Mammary epithelial cell (primary cell): ENCODE measurements at regions of chr3 and their contacts with region 1.

Region 1: DNA sequence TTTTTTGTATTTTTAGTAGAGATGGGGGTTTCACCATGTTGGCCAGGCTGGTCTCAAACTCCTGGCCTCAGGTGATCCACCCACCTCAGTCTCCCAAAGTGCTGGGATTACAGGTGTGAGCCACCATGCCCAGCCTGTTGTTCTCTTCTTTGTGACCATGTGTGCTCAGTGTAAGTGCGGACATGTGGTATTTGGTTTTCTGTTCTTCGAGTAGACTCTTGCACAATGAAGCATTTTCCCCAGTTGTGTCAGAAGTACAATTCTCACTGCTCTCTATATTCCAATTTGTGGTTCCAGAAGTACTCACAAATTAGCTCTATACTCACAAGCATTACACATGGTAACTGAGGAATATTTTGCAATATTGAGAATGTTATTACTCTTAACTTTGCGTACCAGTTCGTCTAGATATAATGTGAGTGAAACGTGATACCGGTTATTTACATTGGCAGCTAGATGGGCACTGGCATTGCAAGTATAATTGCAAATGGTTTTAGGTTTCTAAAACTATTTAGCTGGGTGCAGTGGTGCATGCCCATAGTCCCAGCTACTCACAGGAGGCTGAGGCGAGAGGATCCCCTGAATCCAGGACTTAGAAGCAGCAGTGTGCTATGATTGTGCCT is 34.2 kb upstream of the MTMR14 start:
- DNase-seq: no peak
- H3K4me3 ChIP-seq: no peak overlapping the region
- H3K27ac ChIP-seq: no peak overlapping the region
- H3K4me1 ChIP-seq: no peaks in the 10 kb centered on the region
- H3K27me3 ChIP-seq: no peaks in the 10 kb centered on the region
- CTCF ChIP-seq: no peak

Region 2: DNA sequence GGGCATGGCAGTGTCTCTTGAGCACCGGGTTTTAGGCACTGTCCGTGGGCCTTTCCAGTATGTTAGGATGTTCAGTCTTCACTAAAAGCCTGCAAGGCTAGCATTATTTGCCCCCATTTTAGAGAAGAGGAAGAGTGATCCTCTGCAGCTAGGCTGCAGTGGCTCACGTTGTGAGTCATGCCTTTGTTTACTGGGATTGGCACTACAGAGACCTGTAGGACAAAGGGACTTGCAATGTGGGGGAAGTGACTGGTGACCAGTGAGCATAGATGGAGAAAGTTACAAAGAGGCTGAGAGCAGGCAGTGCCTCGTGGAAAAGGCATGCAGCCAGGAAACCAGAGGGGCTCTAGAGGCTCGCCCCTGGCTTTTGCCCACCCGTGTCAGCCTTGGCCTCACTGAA is 61.7 kb after region 1 on chr3:
- CTCF ChIA-PET with region 1: no interaction called
- dilution Hi-C with region 1: loop called (anchors 5 kb)
- in situ Hi-C with region 1: no loop called
- intact Hi-C with region 1: no loop called
- DNase-seq: no peak
- H3K4me3 ChIP-seq: no peak overlapping the region
- H3K27ac ChIP-seq: no peak overlapping the region
- H3K4me1 ChIP-seq: no peaks in the 10 kb centered on the region
- H3K27me3 ChIP-seq: no peaks in the 10 kb centered on the region
- CTCF ChIP-seq: no peak

Region 3: DNA sequence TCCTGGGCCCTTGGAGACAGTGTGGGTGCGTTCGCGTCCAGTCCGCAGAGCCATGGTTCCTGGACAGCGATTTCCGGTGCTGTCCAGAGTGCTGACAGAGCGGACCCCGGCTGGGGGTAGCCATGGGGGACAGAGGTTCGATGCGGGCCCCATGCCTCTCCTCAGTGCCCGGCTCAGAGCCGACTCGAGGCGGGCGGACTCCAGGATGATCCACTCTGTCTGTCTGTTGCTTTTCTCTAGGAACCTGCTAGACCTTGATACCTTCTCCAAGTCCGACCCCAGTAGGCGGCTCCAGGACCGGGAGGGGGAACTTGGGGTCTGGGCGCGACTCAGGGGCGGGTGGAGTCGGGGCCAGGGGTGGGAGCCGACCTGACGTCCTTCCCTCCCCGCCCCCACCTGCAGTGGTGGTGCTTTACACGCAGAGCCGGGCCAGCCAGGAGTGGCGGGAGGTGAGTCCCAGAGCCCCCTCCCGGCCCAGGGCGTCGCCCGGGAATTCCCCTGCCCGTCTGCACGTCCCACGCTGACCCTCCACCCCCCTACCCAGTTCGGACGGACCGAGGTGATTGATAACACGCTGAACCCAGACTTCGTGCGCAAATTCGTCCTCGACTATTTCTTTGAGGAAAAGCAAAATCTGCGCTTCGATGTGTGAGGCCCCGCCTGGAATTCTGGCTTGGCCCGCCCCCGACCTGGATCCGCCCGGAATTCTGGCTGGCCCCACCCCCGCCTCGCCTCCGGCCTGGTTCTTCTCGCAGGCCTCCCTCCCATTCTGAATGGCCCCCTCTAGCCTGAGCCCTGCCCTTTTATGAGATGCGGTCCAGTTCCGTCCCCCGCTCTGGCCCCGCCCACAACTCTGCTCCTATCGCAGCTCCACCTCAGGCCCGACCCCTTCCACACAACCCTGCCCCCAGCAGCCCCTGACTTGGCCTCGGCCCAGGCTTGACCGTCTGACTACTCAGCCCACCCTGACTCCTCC is 89.5 kb after region 1 on chr3:
- CTCF ChIA-PET with region 1: no interaction called
- dilution Hi-C with region 1: no loop called
- in situ Hi-C with region 1: no loop called
- intact Hi-C with region 1: no loop called
- DNase-seq: no peak
- H3K4me3 ChIP-seq: peak overlapping the region; percentile 29 to 41 (median 30)
- H3K27ac ChIP-seq: no peak overlapping the region
- H3K4me1 ChIP-seq: peaks cover 16% of the 10 kb centered on the region
- H3K27me3 ChIP-seq: no peaks in the 10 kb centered on the region
- CTCF ChIP-seq: no peak